Dendritic cell treated with granulocyte-macrophage colony-stimulating factor and Interleukin-4, amounts not matched to agents 40 ng/mL and 50 ng/mL, for 4 days (primary cell): ENCODE measurements at regions of chr2 and their contacts with region 1.

Region 1: GRCh38 chr2:199488772-199489400 is 31.1 kb upstream of the SATB2 start:
- H3K4me3 Mint-ChIP-seq: no peak overlapping the region
- H3K27ac Mint-ChIP-seq: no peak overlapping the region
- H3K4me1 Mint-ChIP-seq: no peaks in the 10 kb centered on the region
- H3K27me3 Mint-ChIP-seq: peaks cover 20% of the 10 kb centered on the region

Region 2: GRCh38 chr2:198309673-198310280 is 1179.1 kb before region 1 on chr2:
- intact Hi-C with region 1: loop called (anchors 2 kb)
- H3K4me3 Mint-ChIP-seq: no peak overlapping the region
- H3K27ac Mint-ChIP-seq: no peak overlapping the region
- H3K4me1 Mint-ChIP-seq: no peaks in the 10 kb centered on the region
- H3K27me3 Mint-ChIP-seq: peaks cover 17% of the 10 kb centered on the region

Region 3: DNA sequence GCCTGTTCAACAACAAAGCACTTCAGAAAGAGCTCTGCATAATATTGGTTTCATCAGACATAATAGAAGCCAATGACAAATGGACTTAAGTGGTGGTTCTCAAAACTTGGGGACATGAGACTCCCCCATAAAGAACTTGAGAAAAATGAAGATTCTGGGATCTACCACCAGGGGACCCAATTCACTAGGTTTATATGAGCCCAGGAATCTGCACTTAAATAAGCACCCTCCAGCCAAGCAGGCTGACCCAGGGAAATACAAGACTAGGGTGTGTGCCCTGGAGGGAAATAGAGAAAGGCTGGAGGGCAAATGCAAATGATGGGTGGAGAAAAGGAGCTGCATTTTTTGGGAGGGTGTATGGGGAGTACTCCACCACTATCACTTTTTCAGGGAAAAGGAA is 83.6 kb before region 1 on chr2:
- intact Hi-C with region 1: loop called (anchors 10 kb)
- H3K4me3 Mint-ChIP-seq: no peak overlapping the region
- H3K27ac Mint-ChIP-seq: no peak overlapping the region
- H3K4me1 Mint-ChIP-seq: no peaks in the 10 kb centered on the region
- H3K27me3 Mint-ChIP-seq: no peaks in the 10 kb centered on the region